Activated T-helper 1 cell treated with anti-CD3 and anti-CD28 coated beads, Interleukin-12 subunit alpha, Interleukin-12 subunit beta, Interleukin-2, Interleukin-4 antibody, amounts not matched to agents 30 ng/mL and 10 ng/mL and 1 ng/mL, durations not matched to agents 14 hours and 24 hours and 36 hours (primary cell): ENCODE measurements at regions of chr6 and their contacts with region 1.

Region 1: GRCh38 chr6:130513770-130514169 is 148.0 kb downstream of the TMEM200A start:
- DNase-seq: peak; percentile 82
- H3K4me3 Mint-ChIP-seq: peak overlapping the region; percentile 64
- H3K27ac Mint-ChIP-seq: peak overlapping the region; percentile 84
- H3K4me1 Mint-ChIP-seq: peaks cover 65% of the 10 kb centered on the region
- H3K27me3 Mint-ChIP-seq: no peaks in the 10 kb centered on the region

Region 2: DNA sequence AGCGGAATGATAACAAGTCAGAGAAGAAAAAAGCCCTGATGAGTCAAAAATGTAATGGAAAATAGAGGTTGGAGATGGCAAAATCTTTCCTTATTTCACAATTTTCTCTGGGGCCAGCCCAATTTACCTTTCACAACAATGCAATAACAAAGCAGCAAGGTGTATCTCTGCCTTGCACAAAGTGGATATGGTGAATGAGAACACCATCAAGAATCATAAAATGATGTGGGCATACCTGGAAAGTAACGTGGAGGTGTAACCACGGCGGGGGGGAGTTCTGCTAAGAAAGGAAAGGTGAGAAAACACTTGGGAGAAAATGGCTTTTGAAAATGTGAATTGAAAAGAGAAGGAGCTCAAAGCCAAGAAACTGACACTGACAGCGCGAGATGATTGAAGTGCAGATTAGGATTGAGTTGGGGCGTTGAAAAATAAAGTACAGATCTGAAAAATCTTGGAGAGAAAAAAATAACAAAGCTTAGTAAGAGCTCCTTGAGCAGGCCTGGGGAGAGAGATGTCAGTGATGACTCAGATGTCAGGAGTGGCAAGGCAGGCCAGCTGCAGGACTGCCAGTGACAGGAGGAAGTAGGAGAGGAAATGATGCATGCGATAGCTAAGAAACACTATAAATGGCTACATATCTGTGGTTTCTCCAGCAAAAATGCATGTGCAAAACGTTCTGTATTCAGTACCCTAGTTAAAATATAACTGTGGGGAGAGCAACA is 830.0 kb before region 1 on chr6:
- intact Hi-C with region 1: loop called (anchors 10 kb)
- DNase-seq: peak; percentile 55
- H3K4me3 Mint-ChIP-seq: peak overlapping the region; percentile 47
- H3K27ac Mint-ChIP-seq: peak overlapping the region; percentile 77
- H3K4me1 Mint-ChIP-seq: peaks cover 63% of the 10 kb centered on the region
- H3K27me3 Mint-ChIP-seq: no peaks in the 10 kb centered on the region

Region 3: DNA sequence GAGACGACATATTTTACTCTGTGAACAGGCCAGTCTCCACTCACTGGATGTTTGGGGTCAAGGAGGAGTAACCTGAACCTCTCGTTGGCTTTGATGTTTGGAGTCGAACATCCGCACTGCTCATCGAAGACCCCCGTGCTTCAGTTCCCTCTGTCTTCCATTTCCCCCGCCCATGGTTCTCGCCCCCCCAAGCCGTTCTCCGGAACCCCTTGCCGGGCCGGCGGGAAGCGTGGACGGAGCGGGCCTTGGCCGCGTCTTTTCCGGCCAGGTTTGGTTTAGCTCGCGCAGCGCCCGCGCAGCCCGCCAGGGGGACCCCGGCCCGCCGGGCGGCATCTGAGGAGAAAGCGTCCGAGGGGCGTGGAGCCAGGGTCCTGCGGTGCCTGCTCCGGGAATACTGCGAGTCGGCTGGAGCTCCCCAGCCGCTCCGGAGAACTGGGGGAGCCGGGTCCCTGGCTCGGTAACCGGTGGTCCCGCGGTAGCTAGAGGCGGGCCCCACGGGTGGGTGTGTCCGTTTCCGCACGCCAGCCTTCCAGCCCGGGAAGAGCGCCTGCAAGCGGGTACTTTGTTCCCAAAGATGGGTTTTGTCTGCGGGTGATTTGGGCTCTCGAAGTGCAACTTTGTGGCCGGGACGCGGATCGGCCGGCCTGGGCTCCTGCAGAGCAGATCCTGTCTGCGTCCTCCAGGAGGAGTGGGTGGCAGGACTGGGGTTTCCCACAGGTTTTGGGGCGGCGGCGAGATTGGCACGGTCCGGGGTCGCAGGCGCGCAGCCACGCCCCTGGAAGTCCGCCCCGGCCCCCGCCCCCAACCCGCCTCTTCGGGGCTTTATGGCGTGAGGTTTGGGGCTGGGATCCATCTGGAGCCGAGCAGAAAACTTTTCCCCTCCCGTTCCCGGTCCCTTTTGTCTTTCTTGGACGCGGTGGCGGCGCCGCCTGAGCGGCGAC is 148.3 kb before region 1 on chr6 and contains the start of gene TMEM200A:
- intact Hi-C with region 1: loop called (anchors 5 kb)
- DNase-seq: peak; percentile 41
- H3K4me3 Mint-ChIP-seq: peak within 1 kb of the TSS; percentile 78
- H3K27ac Mint-ChIP-seq: no peak within 1 kb of the TSS
- H3K4me1 Mint-ChIP-seq: peaks cover 25% of the 10 kb centered on the region
- H3K27me3 Mint-ChIP-seq: peaks cover 50% of the 10 kb centered on the region
- total RNA-seq, gene TMEM200A: 0.67 and 0.69 TPM in 2 replicates

Region 4: GRCh38 chr6:130620338-130620781 is 106.6 kb after region 1 on chr6:
- intact Hi-C with region 1: loop called (anchors 1 kb)
- DNase-seq: no peak
- H3K4me3 Mint-ChIP-seq: no peak overlapping the region
- H3K27ac Mint-ChIP-seq: no peak overlapping the region
- H3K4me1 Mint-ChIP-seq: peaks cover 43% of the 10 kb centered on the region
- H3K27me3 Mint-ChIP-seq: no peaks in the 10 kb centered on the region

Region 5: DNA sequence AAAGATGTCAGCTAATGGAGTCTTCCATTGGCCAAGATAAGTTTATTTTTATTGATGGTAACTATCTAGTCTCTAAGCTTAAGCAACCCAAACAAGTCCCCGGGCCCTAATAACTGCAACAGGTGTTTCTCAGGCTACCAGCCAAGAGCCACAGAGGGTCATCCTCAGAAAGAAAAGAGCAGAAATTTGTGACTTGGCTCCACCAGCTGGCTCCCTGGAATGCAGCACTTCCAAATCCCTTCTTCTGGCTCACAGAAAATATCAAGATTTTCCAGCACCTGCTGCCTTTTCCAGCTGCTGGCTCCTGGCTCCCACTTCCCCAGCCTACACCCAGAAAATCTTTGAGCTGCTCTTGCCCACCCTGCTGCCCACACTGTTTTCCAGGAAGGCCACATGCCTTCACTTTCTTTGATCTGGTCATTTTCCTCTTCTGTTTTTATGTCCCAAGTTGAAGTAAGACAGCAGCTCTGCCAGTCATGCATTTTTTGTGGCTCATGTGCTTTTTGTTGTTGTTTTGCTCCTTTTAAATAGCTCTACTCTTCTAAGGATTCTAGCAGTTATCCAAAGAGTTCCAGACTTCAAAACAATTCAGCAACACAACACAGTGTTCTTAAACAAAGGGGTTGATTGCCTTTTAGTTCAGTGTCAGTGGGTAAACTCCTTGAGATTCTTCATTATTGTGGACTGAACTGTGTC is 162.5 kb after region 1 on chr6:
- intact Hi-C with region 1: loop called (anchors 1 kb)
- DNase-seq: no peak
- H3K4me3 Mint-ChIP-seq: no peak overlapping the region
- H3K27ac Mint-ChIP-seq: no peak overlapping the region
- H3K4me1 Mint-ChIP-seq: peaks cover 22% of the 10 kb centered on the region
- H3K27me3 Mint-ChIP-seq: no peaks in the 10 kb centered on the region